Psoas muscle (tissue), 8 donors: ENCODE measurements at regions of chr12 and their contacts with region 1.

Region 1: DNA sequence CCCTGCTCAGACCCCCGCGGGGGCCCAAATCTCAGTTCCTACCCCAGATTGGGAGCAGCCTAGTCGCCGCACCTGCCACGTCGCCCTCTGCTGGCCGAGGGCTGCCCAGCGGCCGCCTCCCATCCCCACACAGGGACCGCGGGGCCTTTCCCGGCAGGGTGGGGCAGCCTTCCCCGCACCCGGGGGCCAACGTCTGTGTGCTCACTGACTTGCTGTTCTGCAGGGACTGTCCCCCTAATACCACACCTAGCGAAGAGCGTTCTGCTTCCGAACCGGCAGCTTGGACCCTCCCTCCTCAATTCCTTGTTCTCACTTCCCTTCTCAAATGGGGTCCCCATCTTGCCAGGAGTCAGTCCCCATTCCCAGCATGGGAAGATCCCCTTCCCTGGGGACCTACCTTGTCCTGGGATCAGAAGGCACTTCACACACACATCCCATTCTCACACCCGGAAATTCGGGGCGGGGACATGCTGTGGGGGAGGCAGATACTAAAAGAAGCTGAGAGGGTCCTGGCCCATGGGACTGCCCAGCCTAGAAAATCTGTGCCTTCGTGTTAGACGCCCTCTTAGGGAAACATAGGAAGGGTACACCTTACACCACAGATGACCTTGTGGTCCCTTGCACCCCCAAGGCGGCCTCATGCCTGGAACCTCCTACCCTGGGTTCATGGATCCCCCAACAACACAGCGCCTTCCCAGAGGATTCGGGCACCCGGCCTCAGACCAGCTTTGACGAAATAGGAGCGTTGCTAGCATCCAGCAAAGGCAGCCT is 16.4 kb downstream of the ACVRL1 start:
- DNase-seq: peak; percentile 76 to 88
- ATAC-seq: peak; percentile 61 to 82 (median 67)
- H3K4me3 ChIP-seq: peak overlapping the region; percentile 41
- H3K27ac ChIP-seq: peak overlapping the region; percentile 74
- H3K4me1 ChIP-seq: peaks cover 40% of the 10 kb centered on the region
- H3K27me3 ChIP-seq: no peaks in the 10 kb centered on the region
- CTCF ChIP-seq: peak; percentile 80

Region 2: GRCh38 chr12:51891843-51892242 is 31.8 kb before region 1 on chr12:
- intact Hi-C with region 1: loop called in 1 of 2 experiments (anchors 1 kb)
- DNase-seq: no peak
- ATAC-seq: no peak
- H3K4me3 ChIP-seq: no peak overlapping the region
- H3K27ac ChIP-seq: no peak overlapping the region
- H3K4me1 ChIP-seq: no peaks in the 10 kb centered on the region
- H3K27me3 ChIP-seq: peaks cover 0 to 18% (median 0%) of the 10 kb centered on the region in 3 donors
- CTCF ChIP-seq: peak; percentile 34